Activated CD4-positive, alpha-beta T cell treated with anti-CD3 and anti-CD28 coated beads, Interleukin-2, amount 10 ng/mL, durations not matched to agents 7 days and 5 days (primary cell): ENCODE measurements at regions of chr17 and their contacts with region 1.

Region 1: DNA sequence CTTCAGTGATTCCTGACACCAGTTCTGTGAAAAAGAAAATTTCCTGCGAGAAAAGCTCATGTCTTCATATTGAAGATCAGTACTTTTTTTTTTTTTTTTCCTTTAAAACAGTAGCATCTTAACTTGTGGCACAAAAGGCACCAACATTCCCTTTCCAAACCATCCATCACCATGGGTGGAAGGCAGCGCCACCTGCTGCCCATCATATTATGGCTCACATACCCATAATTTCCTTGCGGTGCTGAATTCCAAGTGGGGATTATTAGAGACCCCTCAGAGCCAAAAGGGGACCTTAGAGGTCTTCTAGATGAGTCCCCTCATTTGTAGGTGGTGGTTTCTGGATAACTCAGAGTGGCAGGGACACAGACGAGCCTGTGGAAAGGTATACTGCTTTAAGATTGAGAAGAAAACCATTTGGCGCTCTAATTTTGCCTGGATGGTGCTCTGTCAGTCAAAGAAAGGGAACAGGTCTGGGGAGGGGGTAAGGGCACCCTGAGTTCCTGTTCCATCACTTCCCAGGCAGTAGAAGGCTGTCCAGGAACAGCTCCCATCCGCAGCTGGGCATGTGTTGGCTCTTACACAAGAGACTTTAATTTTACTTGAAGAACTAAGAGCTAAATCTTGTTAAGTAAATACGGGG is 7.9 kb upstream of the SOST start:
- DNase-seq: peak; percentile 57
- H3K4me3 Mint-ChIP-seq: no peak overlapping the region
- H3K27ac Mint-ChIP-seq: no peak overlapping the region
- H3K4me1 Mint-ChIP-seq: no peaks in the 10 kb centered on the region
- H3K27me3 Mint-ChIP-seq: peaks cover 7% of the 10 kb centered on the region

Region 2: GRCh38 chr17:43694077-43694870 is 72.3 kb before region 1 on chr17:
- CTCF ChIA-PET with region 1: interaction called, 135 read pairs
- POLR2A ChIA-PET with region 1: no interaction called
- DNase-seq: peak; percentile 82
- H3K4me3 Mint-ChIP-seq: no peak overlapping the region
- H3K27ac Mint-ChIP-seq: no peak overlapping the region
- H3K4me1 Mint-ChIP-seq: no peaks in the 10 kb centered on the region
- H3K27me3 Mint-ChIP-seq: peaks cover 7% of the 10 kb centered on the region

Region 3: GRCh38 chr17:43713494-43714162 is 52.9 kb before region 1 on chr17:
- CTCF ChIA-PET with region 1: interaction called, 10 read pairs
- POLR2A ChIA-PET with region 1: no interaction called
- DNase-seq: no peak
- H3K4me3 Mint-ChIP-seq: peak overlapping the region; percentile 44
- H3K27ac Mint-ChIP-seq: no peak overlapping the region
- H3K4me1 Mint-ChIP-seq: peaks cover 16% of the 10 kb centered on the region
- H3K27me3 Mint-ChIP-seq: peaks cover 51% of the 10 kb centered on the region

Region 4: DNA sequence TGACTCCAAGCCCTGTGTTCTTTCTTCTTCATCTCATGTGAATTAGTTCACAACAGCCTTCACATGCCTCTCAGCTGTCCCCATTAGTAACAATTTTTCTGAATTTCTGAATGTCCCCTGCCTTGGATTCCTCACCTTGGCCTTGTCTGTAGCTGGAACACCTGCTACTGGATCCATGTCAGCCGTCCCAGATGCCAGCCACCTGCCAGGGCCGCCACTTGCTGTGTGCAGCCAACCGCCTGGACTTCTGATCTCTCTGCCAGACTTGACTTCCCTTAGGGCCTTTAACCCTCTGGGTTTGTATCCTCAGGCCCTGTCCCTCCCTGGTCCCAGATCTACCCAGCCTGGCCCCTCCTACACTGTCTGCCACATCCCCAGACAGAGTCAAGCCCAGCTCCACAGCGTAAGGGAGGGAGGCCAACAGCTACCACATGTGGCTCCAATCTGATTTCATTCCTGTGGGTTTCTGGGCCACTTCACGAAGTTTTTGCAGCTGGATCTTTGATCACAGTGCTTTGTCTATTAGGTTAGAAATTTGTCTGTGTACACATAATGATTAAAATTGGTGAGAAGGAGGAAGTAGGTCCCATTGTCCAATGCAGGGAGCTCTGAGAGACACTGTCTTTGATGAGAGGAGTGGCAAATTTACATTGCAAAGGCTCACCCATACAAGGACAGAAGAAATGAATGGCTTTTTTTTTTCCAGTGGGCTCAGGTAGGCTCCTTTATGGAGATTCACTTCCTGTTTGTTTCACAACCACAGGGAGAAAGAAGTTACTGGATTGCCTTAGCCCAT is 125.5 kb after region 1 on chr17:
- CTCF ChIA-PET with region 1: no interaction called
- POLR2A ChIA-PET with region 1: no interaction called
- DNase-seq: no peak
- H3K4me3 Mint-ChIP-seq: no peak overlapping the region
- H3K27ac Mint-ChIP-seq: no peak overlapping the region
- H3K4me1 Mint-ChIP-seq: no peaks in the 10 kb centered on the region
- H3K27me3 Mint-ChIP-seq: peaks cover 12% of the 10 kb centered on the region